ENCODE measurements at regions of chr11 and their contacts with region 1.

Region 1: GRCh38 chr11:4636962-4637661 is at the start of gene OR51D1:
- DNase-seq: peak; percentile 82
- total RNA-seq, gene OR51D1: not detected

Region 2: DNA sequence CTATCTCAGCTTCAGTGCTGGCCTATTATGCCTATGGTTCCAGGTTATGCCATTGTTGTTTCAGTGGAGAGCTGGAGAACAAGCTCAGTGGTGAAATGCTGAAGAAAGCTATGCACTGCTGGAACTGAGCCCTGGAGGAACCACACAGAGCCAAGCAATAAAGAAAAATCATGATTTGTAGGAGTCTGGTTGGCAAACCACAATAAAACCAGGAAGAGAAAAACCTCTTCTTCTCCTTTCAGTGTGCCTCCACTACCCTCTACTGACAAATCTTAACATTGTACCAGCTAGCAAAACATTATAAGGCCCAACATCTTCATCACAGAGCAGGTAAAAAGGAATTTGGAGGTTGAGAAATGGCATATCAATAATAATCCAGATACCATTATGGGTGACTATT is 189.3 kb after region 1 on chr11:
- intact Hi-C with region 1: loop called (anchors 1 kb)
- DNase-seq: no peak

Measured in cardiac septum (tissue), 1 donor.